GM12878 (cell line): ENCODE measurements at regions of chr3 and their contacts with region 1.

Region 1: DNA sequence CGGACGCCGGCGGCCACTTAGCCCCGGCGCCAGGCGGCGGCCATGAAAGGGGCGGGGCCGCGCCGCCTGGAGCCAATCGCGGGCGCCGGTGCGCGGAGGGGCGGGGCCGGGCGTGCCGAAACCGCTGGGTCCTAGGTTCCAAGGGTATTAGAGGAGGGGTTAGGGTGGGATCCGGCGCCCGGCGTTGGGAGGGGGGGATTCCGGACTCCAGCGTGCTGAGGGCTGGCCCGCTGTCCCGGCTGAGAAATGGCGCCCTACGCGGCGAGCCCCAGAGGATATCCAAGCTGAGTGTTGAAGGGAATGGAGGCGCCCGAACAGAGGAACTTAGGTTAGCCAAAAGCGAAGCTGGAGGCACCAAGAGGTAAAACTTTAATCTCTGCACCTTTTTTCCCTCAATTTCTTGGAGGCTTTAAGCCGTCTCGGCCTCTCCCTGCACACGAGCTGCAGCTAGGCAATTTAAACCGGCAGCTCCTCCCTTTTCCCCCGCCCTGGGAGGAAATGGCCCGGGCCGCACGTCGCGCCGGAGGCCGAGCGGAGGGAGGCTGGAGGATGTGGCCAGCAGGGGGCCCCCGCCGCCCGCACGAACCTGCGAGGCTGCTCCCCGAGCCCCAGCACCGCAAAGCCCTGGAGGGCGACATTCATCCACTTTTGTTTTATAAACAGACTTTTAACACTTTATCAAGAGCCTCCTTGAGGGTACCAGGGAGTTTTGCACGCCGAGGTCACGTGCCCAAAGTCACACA is at the start of gene XXYLT1:
- DNase-seq: no peak
- ATAC-seq: peak; percentile 95
- H3K4me3 ChIP-seq: peak within 1 kb of the TSS; percentile 85
- H3K27ac ChIP-seq: peak within 1 kb of the TSS; percentile 64
- H3K4me1 ChIP-seq: peaks cover 10% of the 10 kb centered on the region; the same call in 1 of the 2 replicates
- H3K27me3 ChIP-seq: no peaks in the 10 kb centered on the region
- CTCF ChIP-seq: peak; percentile 84 to 99 (median 91); a peak in 5 of 6 replicates
- EP300 ChIP-seq: no peak
- POLR2A ChIP-seq: no peak; the same call in 1 of the 2 replicates
- RAD21 ChIP-seq: peak; percentile 82
- polyA plus RNA-seq, gene XXYLT1: 1.2 to 3.2 TPM

Region 2: GRCh38 chr3:195250473-195251251 is 20.6 kb before region 1 on chr3:
- CTCF ChIA-PET with region 1: interaction called, 5 read pairs
- POLR2A ChIA-PET with region 1: no interaction called
- RAD21 ChIA-PET with region 1: interaction called, 11 read pairs
- SMC1A ChIA-PET with region 1: interaction called, 4 read pairs
- in situ Hi-C with region 1: no loop called
- intact Hi-C with region 1: no loop called
- DNase-seq: no peak
- ATAC-seq: peak; percentile 76
- H3K4me3 ChIP-seq: no peak overlapping the region
- H3K27ac ChIP-seq: peak overlapping the region; percentile 23
- H3K4me1 ChIP-seq: peaks cover 25% of the 10 kb centered on the region
- H3K27me3 ChIP-seq: no peaks in the 10 kb centered on the region
- CTCF ChIP-seq: peak; percentile 39 to 60 (median 42); a peak in 5 of 6 replicates
- EP300 ChIP-seq: no peak
- POLR2A ChIP-seq: no peak
- RAD21 ChIP-seq: peak; percentile 55

Region 3: GRCh38 chr3:195297446-195297845 is 26.2 kb after region 1 on chr3:
- CTCF ChIA-PET with region 1: interaction called, 18 read pairs
- POLR2A ChIA-PET with region 1: no interaction called
- RAD21 ChIA-PET with region 1: interaction called, 6 read pairs
- SMC1A ChIA-PET with region 1: interaction called, 6 read pairs
- in situ Hi-C with region 1: no loop called
- intact Hi-C with region 1: no loop called
- DNase-seq: peak; percentile 5
- ATAC-seq: peak; percentile 45
- H3K4me3 ChIP-seq: no peak overlapping the region
- H3K27ac ChIP-seq: no peak overlapping the region
- H3K4me1 ChIP-seq: no peaks in the 10 kb centered on the region
- H3K27me3 ChIP-seq: no peaks in the 10 kb centered on the region
- CTCF ChIP-seq: no peak
- EP300 ChIP-seq: no peak
- POLR2A ChIP-seq: no peak
- RAD21 ChIP-seq: no peak

Region 4: GRCh38 chr3:195517030-195517429 is 245.7 kb after region 1 on chr3:
- CTCF ChIA-PET with region 1: interaction called, 179 read pairs
- POLR2A ChIA-PET with region 1: interaction called, 3 read pairs
- RAD21 ChIA-PET with region 1: interaction called, 84 read pairs
- SMC1A ChIA-PET with region 1: interaction called, 66 read pairs
- in situ Hi-C with region 1: loop called (anchors 10 kb)
- intact Hi-C with region 1: loop called (anchors 1 kb)
- DNase-seq: no peak
- ATAC-seq: no peak
- H3K4me3 ChIP-seq: no peak overlapping the region
- H3K27ac ChIP-seq: no peak overlapping the region
- H3K4me1 ChIP-seq: no peaks in the 10 kb centered on the region
- H3K27me3 ChIP-seq: no peaks in the 10 kb centered on the region
- CTCF ChIP-seq: no peak
- EP300 ChIP-seq: no peak
- POLR2A ChIP-seq: no peak
- RAD21 ChIP-seq: no peak

Region 5: DNA sequence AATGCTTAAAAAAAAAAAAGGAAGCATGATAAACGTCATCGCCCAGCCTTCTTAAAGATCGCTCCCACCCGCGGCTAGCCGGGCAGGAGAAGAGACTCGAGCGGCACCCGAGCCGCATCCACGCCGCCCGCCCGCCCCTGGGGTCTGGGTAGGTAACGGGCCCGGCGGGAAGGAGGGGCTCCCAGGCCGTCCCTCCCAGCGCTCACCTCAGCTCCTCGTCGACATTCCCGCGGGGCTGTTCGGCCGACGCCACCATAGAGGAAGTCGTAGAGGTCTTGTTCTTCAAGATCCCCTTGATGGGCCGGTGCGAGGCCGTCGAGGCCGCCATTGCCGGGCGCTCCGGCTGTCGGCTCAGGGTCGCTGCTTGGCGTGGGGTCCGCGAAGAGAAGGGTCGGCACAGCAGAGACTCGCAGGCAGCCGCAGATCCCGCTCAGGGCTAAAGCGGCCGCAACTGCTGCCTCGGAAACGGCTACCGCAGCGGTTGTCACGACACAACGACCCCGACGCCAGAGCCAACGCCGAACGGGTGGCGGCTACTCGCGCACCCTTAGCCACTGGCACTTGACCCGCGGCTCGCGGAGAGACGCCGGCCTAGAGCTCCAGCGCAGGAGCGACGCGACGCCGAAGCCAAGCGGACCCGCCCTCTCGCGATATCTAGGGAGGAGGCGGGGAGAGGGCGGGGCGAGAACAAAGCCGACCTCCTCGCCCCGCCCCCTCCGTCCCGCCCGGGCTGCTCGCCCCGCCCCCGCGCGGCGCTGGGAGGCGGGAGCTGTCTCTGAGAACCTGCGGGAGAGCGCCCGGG is 271.6 kb after region 1 on chr3 and contains the start of gene PPP1R2:
- CTCF ChIA-PET with region 1: interaction called, 51 read pairs
- POLR2A ChIA-PET with region 1: interaction called, 12 read pairs
- RAD21 ChIA-PET with region 1: interaction called, 60 read pairs
- SMC1A ChIA-PET with region 1: interaction called, 22 read pairs
- in situ Hi-C with region 1: no loop called
- intact Hi-C with region 1: no loop called
- DNase-seq: peak; percentile 64
- ATAC-seq: peak; percentile 88
- H3K4me3 ChIP-seq: peak within 1 kb of the TSS; percentile 77
- H3K27ac ChIP-seq: peak within 1 kb of the TSS; percentile 60
- H3K4me1 ChIP-seq: peaks cover 15% of the 10 kb centered on the region
- H3K27me3 ChIP-seq: no peaks in the 10 kb centered on the region
- CTCF ChIP-seq: no peak
- EP300 ChIP-seq: no peak
- POLR2A ChIP-seq: peak; percentile 99
- RAD21 ChIP-seq: no peak
- polyA plus RNA-seq, gene PPP1R2: 10.5 to 22.7 TPM